RWPE1 (cell line): ENCODE measurements at regions of chr17 and their contacts with region 1.

Region 1: DNA sequence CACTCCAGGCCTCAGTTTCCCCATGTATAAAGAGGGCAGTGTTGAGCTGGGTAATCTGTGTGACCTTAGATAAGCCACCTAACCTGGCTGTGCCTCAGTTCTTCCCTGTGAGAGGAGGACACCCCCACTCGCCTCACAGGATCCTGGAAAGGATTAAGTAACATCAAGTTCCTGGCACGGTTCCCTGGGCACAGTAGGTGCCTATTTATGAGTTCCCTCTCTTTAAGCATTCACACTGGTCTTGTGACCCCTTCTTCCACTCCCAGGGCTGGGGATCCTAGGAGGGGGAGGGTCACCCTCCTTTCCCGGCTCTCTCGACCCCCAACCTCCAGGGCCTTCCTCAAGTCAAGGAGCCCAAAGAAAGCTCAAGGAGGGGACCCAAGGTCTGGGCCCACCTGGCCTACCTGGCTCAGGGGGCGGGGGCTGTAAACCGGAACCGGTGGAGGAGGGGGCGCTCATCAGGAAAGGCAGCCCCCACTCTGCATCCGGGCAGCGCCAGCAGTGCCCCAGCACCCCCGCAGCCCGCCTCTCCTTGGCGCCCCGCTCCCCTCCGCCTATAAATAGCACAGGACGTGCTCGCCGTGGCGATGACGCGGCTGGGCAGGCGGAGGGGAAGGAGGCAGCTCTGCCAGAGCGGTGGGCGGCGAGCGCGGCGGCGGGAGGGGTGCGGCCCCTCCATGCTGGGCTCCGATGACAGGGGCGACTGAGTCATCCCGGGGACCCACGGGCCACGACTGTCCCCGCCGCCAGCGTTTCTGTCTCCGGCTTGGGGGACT is 9.4 kb downstream of the RPL19 start:
- DNase-seq: no peak
- H3K27ac ChIP-seq: peak overlapping the region; percentile 60
- CTCF ChIP-seq: no peak

Region 2: GRCh38 chr17:39235555-39236449 is 26.3 kb after region 1 on chr17:
- CTCF ChIA-PET with region 1: interaction called, 26 read pairs
- POLR2A ChIA-PET with region 1: no interaction called
- DNase-seq: peak; percentile 54
- H3K27ac ChIP-seq: peak overlapping the region; percentile 22
- CTCF ChIP-seq: peak; percentile 67